ENCODE measurements at regions of chr17 and their contacts with region 1.

Region 1: DNA sequence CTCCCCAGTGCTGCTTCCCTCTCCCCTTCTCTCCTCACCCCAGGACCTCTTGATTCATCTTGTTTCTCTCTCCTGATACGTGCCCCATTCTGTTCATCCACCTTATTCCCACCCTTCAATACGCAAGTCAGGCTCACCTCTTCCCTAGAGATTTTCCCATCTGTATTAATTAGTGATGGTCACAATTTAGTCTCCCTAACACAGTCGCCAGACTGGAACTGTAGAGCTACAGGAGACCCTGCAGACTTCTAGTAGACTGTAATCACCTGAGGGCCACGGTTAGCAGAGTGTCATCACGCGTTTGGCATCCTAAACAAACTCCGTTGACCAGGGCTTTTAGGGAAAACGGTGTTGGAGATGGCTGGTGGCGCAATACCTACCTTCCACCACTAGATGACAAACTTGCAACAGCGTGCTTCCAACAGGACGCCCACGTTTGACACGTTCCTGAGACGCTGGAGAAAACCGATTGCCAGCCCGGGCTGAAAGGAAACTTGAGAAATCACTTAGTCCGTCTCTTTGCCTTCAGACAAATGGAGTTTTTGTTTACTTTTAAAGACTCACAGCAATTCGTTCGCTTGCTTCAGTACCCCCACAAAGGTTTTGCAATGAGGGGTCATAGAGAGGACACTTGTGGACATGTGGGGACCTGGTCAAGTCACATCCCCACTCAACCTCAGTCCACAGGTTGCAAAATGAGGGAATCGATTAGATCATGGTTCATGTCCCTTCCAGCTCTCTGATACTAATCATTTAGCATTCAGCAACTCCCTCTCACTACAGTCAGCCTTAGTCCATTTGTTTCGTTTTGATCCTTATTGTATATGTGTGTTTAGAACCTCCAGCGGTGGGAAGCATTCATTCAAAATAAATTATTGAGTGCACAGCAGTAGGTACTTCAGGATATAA is 20.6 kb downstream of the MYL4 start:
- DNase-seq: peak; percentile 80 to 91 (median 84)
- H3K4me3 ChIP-seq: peak overlapping the region; percentile 20
- H3K27ac ChIP-seq: no peak overlapping the region
- H3K4me1 ChIP-seq: no peaks in the 10 kb centered on the region
- H3K27me3 ChIP-seq: no peaks in the 10 kb centered on the region
- CTCF ChIP-seq: peak; percentile 95 to 98 (median 96)
- EP300 ChIP-seq: no peak
- POLR2A ChIP-seq: no peak

Region 2: DNA sequence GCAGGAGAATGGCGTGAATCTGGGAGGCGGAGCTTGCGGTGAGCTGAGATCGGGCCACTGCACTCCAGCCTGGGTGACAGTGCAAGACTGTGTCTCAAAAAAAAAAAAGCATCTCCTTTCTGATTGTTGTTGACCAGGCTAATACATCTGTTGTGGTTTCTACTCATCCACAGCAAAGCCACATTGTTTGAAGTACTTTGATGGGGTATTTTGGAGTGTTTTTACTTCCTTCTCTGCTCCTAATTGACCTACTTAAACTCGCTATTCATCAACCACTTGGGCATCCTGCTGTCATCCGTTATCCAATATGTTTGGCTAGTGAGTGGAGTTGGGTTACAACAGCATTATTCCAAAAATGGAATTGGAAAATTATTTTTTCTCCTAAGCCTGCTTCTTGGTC is 37.2 kb before region 1 on chr17:
- intact Hi-C with region 1: no loop called
- DNase-seq: no peak
- H3K4me3 ChIP-seq: no peak overlapping the region
- H3K27ac ChIP-seq: no peak overlapping the region
- H3K4me1 ChIP-seq: no peaks in the 10 kb centered on the region
- H3K27me3 ChIP-seq: no peaks in the 10 kb centered on the region
- CTCF ChIP-seq: no peak
- EP300 ChIP-seq: no peak
- POLR2A ChIP-seq: no peak

Region 3: DNA sequence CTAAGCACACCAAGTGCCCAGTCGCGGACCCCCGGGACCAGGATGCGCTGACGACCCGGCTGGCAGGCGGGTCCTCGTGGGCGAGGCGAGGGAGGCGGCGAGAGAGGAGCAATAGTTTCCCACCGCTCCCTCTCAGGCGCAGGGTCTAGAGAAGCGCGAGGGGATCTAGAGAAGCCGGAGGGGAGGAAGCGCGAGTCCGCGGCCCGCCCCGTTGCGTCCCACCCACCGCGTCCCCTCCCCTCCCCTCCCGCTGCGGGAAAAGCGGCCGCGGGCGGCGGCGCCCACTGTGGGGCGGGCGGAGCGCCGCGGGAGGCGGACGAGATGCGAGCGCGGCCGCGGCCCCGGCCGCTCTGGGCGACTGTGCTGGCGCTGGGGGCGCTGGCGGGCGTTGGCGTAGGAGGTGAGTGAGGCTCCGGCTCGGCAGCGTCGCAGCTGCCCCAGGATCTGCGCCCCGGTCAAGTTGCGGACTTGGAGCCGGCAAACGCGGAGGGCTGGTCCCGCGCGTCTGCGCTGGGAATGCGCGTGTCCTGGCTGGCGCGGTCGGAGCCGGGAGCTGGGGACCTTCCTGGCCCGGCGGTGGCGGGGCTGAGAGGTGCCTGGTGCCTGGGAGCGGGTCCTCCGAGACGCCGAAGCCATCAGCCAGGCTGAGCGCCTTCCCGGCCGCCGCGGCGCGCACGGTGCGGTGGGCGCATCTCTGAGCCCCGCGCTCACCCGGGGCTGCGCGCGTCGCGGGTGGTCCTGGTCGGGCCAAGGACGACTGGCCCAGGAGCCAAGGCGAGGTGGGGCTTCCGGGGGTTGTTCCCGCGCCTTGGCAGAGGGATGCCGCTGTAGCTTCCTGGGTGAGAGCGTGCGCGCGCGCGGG is 24.0 kb after region 1 on chr17 and contains the start of gene ITGB3:
- intact Hi-C with region 1: loop called in 1 of 4 experiments (anchors 1 kb)
- DNase-seq: peak; percentile 68 to 83 (median 75)
- H3K4me3 ChIP-seq: peak within 1 kb of the TSS; percentile 52
- H3K27ac ChIP-seq: no peak within 1 kb of the TSS
- H3K4me1 ChIP-seq: no peaks in the 10 kb centered on the region
- H3K27me3 ChIP-seq: no peaks in the 10 kb centered on the region
- CTCF ChIP-seq: peak in 2 of 3 donors; percentile 40
- EP300 ChIP-seq: no peak
- POLR2A ChIP-seq: no peak
- total RNA-seq, gene ITGB3: 1.7 to 7.7 (median 2.9) TPM

Region 4: GRCh38 chr17:47305302-47305923 is 75.6 kb after region 1 on chr17:
- intact Hi-C with region 1: loop called in 1 of 4 experiments (anchors 5 kb)
- DNase-seq: no peak
- H3K4me3 ChIP-seq: no peak overlapping the region
- H3K27ac ChIP-seq: no peak overlapping the region
- H3K4me1 ChIP-seq: peaks cover 7% of the 10 kb centered on the region
- H3K27me3 ChIP-seq: no peaks in the 10 kb centered on the region
- CTCF ChIP-seq: no peak
- EP300 ChIP-seq: no peak
- POLR2A ChIP-seq: no peak

Region 5: DNA sequence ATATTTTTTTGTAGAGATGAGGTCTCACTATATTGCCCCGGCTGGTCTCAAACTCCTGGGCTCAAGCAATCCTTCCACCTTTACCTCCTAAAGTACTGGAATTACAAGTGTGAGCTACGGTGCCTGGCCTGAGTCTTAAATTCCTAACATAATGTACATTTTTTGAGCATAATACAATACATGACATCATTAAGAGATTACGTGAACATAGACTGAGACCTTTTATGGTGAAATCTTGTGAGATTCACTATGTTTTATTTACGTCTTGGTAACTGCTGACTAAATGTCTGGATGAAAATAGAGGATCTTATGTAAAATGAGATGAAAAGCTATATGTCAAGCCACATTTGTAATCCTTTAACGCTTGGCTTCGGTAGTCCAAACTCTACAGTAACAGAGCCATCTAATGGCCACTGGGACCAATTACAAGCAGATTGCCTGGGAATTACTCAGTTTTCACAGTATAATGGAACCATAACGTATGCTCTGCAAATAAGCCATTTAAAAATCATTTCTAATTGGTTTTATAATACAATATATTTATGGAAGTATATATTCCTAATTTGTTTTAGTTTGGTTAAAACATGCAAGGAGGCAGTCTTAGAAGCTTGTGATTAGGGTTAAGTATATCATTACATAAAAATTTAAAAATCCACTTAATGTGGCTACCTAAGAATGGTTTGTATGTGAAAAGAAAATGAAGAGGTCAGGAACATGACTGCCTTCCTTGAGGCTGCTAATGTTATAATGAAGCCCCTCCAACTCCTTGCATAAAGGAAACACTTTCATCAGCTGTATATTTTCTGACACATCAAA is 85.9 kb after region 1 on chr17:
- intact Hi-C with region 1: loop called (anchors 2 to 5 kb)
- DNase-seq: peak in 2 of 5 donors; percentile 14 to 55
- H3K4me3 ChIP-seq: no peak overlapping the region
- H3K27ac ChIP-seq: no peak overlapping the region
- H3K4me1 ChIP-seq: no peaks in the 10 kb centered on the region
- H3K27me3 ChIP-seq: no peaks in the 10 kb centered on the region
- CTCF ChIP-seq: peak; percentile 39 to 90 (median 87)
- EP300 ChIP-seq: no peak
- POLR2A ChIP-seq: no peak

Region 6: GRCh38 chr17:47323382-47324222 is 93.8 kb after region 1 on chr17 and contains the start of gene EFCAB13:
- intact Hi-C with region 1: loop called in 2 of 4 experiments (anchors 5 kb)
- DNase-seq: peak; percentile 89 to 94 (median 89)
- H3K4me3 ChIP-seq: peak within 1 kb of the TSS; percentile 70
- H3K27ac ChIP-seq: peak within 1 kb of the TSS; percentile 70 to 74
- H3K4me1 ChIP-seq: no peaks in the 10 kb centered on the region
- H3K27me3 ChIP-seq: no peaks in the 10 kb centered on the region
- CTCF ChIP-seq: peak in 2 of 3 donors; percentile 28 to 33
- EP300 ChIP-seq: no peak
- POLR2A ChIP-seq: peak; percentile 90
- total RNA-seq, gene EFCAB13: 6.4 to 11.5 (median 9.3) TPM

Region 7: GRCh38 chr17:47615766-47616424 is 386.1 kb after region 1 on chr17:
- intact Hi-C with region 1: loop called in 1 of 4 experiments (anchors 5 kb)
- DNase-seq: no peak
- H3K4me3 ChIP-seq: no peak overlapping the region
- H3K27ac ChIP-seq: no peak overlapping the region
- H3K4me1 ChIP-seq: no peaks in the 10 kb centered on the region
- H3K27me3 ChIP-seq: no peaks in the 10 kb centered on the region
- CTCF ChIP-seq: peak; percentile 65 to 73 (median 69)
- EP300 ChIP-seq: no peak
- POLR2A ChIP-seq: no peak

Measured in ovary (tissue), 10 donors.